ENCODE measurements at regions of chr12 and their contacts with region 1.

Region 1: DNA sequence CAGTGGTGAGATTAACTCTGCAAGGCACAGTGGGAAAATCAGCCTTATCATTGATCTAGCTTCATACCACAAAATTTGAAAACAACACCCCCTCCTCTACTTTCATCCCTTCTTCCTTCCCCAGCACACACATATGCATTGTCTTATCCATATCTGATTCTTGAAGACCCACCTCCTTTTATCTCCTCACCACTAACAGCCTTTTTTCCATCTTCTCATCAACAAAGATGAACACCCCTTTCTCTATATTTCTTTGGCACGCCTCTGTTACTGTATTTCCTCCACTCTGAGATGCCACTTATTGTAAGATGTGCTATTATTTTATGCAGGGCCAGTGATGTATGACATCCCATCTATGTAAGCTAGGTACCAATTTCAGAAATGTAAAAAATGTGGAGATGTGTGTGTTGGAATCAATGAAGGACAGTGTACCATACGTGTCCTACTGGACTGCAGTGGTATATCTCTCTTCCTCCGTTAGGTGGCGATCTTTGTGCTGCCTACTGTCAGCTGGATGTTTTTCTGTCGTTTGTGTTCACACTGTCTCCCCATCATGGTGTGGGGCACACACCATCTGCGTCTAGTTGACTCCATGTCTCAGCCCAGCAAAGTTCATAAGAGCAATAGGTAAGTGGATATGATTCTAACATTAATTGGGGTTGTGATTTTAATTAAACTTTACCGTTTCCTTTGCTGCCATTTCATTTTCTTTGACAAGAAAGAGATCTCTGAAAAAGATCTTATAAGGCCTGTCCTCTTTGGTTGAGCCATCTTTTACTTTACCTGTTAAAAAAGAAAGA is 24.0 kb downstream of the CCDC38 start:
- DNase-seq: peak; percentile 47
- ATAC-seq: peak; percentile 99
- H3K4me3 Mint-ChIP-seq: no peak overlapping the region
- H3K27ac Mint-ChIP-seq: no peak overlapping the region
- H3K4me1 Mint-ChIP-seq: no peaks in the 10 kb centered on the region
- H3K27me3 Mint-ChIP-seq: no peaks in the 10 kb centered on the region
- CTCF ChIP-seq: peak; percentile 73

Region 2: GRCh38 chr12:95820102-95820703 is 98.2 kb before region 1 on chr12:
- CTCF ChIA-PET with region 1: no interaction called
- POLR2A ChIA-PET with region 1: no interaction called
- DNase-seq: no peak
- ATAC-seq: no peak
- H3K4me3 Mint-ChIP-seq: no peak overlapping the region
- H3K27ac Mint-ChIP-seq: no peak overlapping the region
- H3K4me1 Mint-ChIP-seq: peaks cover 3% of the 10 kb centered on the region; the same call in 1 of the 2 replicates
- H3K27me3 Mint-ChIP-seq: no peaks in the 10 kb centered on the region
- CTCF ChIP-seq: no peak; the same call in 1 of the 2 replicates

Region 3: GRCh38 chr12:95942524-95943329 is 24.3 kb after region 1 on chr12 and contains the start of gene CCDC38:
- CTCF ChIA-PET with region 1: interaction called, 34 read pairs
- POLR2A ChIA-PET with region 1: no interaction called
- DNase-seq: peak; percentile 70
- ATAC-seq: peak; percentile 87
- H3K4me3 Mint-ChIP-seq: peak within 1 kb of the TSS; percentile 94
- H3K27ac Mint-ChIP-seq: peak within 1 kb of the TSS; percentile 58; the same call in 1 of the 2 replicates
- H3K4me1 Mint-ChIP-seq: peaks cover 23% of the 10 kb centered on the region
- H3K27me3 Mint-ChIP-seq: peaks cover 23% of the 10 kb centered on the region
- CTCF ChIP-seq: no peak
- total RNA-seq, gene CCDC38: 0.07 TPM in 1 of 3 replicates, not detected in the others